Activated CD8-positive, alpha-beta T cell treated with anti-CD3 and anti-CD28 coated beads for 36 hours (primary cell): ENCODE measurements at regions of chr3 and their contacts with region 1.

Region 1: GRCh38 chr3:11379233-11379823 is 107.1 kb downstream of the ATG7 start:
- DNase-seq: no peak
- ATAC-seq: peak; percentile 34
- H3K4me3 Mint-ChIP-seq: no peak overlapping the region
- H3K27ac Mint-ChIP-seq: no peak overlapping the region
- H3K4me1 Mint-ChIP-seq: no peaks in the 10 kb centered on the region
- H3K27me3 Mint-ChIP-seq: no peaks in the 10 kb centered on the region
- CTCF ChIP-seq: peak; percentile 23

Region 2: GRCh38 chr3:11116336-11117059 is 262.8 kb before region 1 on chr3:
- CTCF ChIA-PET with region 1: no interaction called
- POLR2A ChIA-PET with region 1: no interaction called
- intact Hi-C with region 1: no loop called
- DNase-seq: no peak
- ATAC-seq: no peak
- H3K4me3 Mint-ChIP-seq: no peak overlapping the region
- H3K27ac Mint-ChIP-seq: no peak overlapping the region
- H3K4me1 Mint-ChIP-seq: no peaks in the 10 kb centered on the region
- H3K27me3 Mint-ChIP-seq: peaks cover 16% of the 10 kb centered on the region
- CTCF ChIP-seq: no peak

Region 3: DNA sequence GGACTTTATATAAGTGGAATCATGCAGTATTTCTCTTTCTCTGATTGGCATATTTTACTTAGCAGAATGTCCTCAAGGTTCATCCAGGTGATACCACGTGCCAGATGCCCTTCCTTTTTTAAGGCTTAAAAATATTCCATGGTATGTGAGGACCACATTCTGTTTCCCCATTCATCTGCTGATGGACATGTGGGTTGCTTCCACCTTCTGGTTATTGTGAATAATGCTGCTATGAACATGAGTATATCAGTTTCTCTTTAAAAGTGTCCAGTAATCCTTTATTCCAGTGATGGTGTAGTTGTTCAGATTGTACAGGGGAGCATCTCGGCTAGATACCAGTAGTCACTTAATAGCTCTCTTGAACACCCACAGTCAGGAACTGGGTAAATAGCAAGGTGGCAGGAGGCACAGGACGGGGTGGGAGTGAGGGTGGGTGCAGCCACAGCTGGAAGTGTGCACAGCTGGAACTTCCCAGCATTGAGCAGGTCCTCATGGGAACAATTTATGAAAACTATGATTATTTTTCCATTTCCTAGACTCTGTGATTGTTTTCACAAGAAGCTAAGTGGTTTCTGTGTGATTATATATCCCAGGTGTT is 157.4 kb before region 1 on chr3:
- CTCF ChIA-PET with region 1: no interaction called
- POLR2A ChIA-PET with region 1: no interaction called
- intact Hi-C with region 1: no loop called
- DNase-seq: no peak
- ATAC-seq: no peak
- H3K4me3 Mint-ChIP-seq: no peak overlapping the region
- H3K27ac Mint-ChIP-seq: no peak overlapping the region
- H3K4me1 Mint-ChIP-seq: peaks cover 10% of the 10 kb centered on the region
- H3K27me3 Mint-ChIP-seq: peaks cover 1% of the 10 kb centered on the region
- CTCF ChIP-seq: no peak

Region 4: DNA sequence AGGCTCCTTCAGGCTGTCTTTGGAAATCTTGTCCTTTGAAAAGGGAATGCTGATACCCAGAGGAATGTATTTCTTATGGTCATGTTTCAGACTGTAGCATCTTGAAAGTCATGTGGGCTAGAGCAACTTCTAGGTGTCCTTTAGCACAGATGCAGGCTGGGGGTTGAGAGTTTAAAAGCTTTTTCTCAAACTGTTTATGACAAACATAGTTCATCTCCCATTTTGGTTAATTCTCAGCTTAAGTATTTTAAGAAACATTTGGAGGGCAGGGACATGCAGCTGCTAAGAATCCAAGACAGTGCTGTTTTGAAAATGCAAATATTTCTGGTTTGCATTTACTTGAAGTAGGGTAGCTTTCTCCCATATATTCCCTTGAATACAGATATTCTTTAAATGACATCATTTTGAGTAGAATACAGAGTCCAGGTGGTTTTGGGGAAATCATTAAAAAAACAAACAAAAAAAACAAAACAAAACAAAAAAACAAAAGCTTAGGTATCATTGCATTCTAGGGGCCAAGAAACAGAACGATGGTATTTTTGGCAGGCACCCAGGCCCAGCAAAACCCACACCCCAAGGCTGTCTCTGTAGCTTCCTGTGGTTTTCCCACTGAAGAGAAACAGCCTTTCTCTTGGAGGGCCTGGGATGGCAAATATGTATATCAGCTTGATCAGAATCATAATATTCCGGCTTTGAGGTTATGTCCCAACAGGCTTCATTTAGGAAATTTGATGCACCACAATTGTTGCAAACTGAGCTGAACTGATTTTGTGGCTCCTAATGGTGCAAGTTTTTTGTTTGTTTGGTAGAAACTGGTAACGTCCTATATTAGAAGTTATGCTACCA is 12.9 kb after region 1 on chr3:
- CTCF ChIA-PET with region 1: interaction called, 18 read pairs
- POLR2A ChIA-PET with region 1: no interaction called
- intact Hi-C with region 1: no loop called
- DNase-seq: no peak
- ATAC-seq: no peak
- H3K4me3 Mint-ChIP-seq: no peak overlapping the region
- H3K27ac Mint-ChIP-seq: no peak overlapping the region
- H3K4me1 Mint-ChIP-seq: peaks cover 35% of the 10 kb centered on the region
- H3K27me3 Mint-ChIP-seq: no peaks in the 10 kb centered on the region
- CTCF ChIP-seq: no peak

Region 5: DNA sequence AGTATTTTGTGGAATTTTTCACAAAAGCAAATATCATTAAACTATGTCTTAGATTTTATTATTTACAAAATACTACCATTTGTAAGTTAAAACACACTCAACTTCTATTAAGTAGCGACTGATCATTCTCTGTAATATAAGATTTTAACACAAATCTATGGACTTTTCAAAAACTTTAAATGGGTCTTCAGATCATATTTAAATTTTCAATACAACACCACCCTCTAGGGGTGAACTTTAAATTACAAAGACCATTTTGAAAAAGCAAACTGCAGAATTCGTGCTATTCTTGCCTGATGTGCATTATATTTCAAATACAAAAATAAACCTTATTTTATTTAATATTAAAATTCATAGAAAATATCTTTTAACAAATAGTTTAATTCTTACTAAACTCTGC is 272.6 kb after region 1 on chr3:
- CTCF ChIA-PET with region 1: interaction called, 43 read pairs
- POLR2A ChIA-PET with region 1: no interaction called
- intact Hi-C with region 1: loop called (anchors 5 kb)
- DNase-seq: no peak
- ATAC-seq: no peak
- H3K4me3 Mint-ChIP-seq: no peak overlapping the region
- H3K27ac Mint-ChIP-seq: no peak overlapping the region
- H3K4me1 Mint-ChIP-seq: peaks cover 19% of the 10 kb centered on the region
- H3K27me3 Mint-ChIP-seq: no peaks in the 10 kb centered on the region
- CTCF ChIP-seq: peak; percentile 70